ENCODE measurements at regions of chr2 and their contacts with region 1.

Region 1: DNA sequence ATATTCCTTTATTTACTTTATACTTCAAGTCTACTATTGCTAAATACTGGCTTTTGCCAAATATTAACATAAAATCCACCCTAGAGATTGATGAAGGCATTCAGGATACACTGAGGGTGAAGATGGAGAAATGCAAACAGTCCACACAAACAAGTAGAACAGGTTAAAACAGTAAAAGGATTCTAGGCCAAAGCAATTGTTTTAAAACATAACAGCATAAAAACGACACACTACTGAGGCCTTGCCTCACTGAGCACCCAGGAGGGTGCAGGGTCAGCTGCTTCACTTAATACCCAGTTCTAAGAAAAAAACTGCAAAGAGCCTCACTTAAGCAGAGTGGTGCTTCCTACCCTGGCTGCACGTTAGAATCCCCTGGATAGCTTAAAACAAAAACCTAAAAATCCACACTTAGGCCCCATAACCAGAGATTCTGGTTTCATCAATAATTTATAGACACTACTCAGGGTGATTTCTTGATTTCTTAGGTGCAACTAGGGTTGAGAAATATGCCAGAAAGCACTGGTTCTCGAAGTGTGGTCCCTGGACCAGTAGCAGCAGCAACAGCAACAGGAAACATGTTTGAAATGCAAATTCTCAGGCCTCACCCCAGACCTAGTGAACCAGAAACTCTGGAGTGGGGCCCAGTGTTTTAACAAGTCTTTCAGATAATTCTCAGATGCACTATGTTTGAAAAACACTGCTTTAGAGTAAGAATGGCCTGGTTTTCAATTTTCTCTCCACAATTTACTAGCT is 279.2 kb downstream of the ZEB2 start:
- DNase-seq: peak; percentile 74
- ATAC-seq: peak; percentile 93
- H3K4me3 ChIP-seq: peak overlapping the region; percentile 39; the same call in 1 of the 2 replicates
- H3K27ac ChIP-seq: peak overlapping the region; percentile 78
- H3K4me1 ChIP-seq: peaks cover 33% of the 10 kb centered on the region
- H3K27me3 ChIP-seq: no peaks in the 10 kb centered on the region
- CTCF ChIP-seq: no peak
- EP300 ChIP-seq: peak in 1 of 2 experiments; percentile 19; a peak in 1 of 4 replicates
- POLR2A ChIP-seq: no peak
- RAD21 ChIP-seq: 0 out of 2 replicates have a peak, but pooled peaks have one; percentile 1

Region 2: GRCh38 chr2:144215701-144216675 is 24.8 kb before region 1 on chr2:
- CTCF ChIA-PET with region 1: interaction called, 7 read pairs
- POLR2A ChIA-PET with region 1: interaction called, 9 read pairs
- RAD21 ChIA-PET with region 1: interaction called, 9 read pairs
- SMC1A ChIA-PET with region 1: interaction called, 68 read pairs
- in situ Hi-C with region 1: no loop called
- intact Hi-C with region 1: no loop called
- DNase-seq: peak; percentile 20
- ATAC-seq: peak; percentile 72
- H3K4me3 ChIP-seq: no peak overlapping the region
- H3K27ac ChIP-seq: peak overlapping the region; percentile 16
- H3K4me1 ChIP-seq: peaks cover 28% of the 10 kb centered on the region
- H3K27me3 ChIP-seq: no peaks in the 10 kb centered on the region
- CTCF ChIP-seq: no peak
- EP300 ChIP-seq: 0 out of 4 replicates have a peak, but pooled peaks of 1 of the 2 experiments have one; percentile 9
- POLR2A ChIP-seq: no peak
- RAD21 ChIP-seq: 0 out of 2 replicates have a peak, but pooled peaks have one; percentile 12

Region 3: DNA sequence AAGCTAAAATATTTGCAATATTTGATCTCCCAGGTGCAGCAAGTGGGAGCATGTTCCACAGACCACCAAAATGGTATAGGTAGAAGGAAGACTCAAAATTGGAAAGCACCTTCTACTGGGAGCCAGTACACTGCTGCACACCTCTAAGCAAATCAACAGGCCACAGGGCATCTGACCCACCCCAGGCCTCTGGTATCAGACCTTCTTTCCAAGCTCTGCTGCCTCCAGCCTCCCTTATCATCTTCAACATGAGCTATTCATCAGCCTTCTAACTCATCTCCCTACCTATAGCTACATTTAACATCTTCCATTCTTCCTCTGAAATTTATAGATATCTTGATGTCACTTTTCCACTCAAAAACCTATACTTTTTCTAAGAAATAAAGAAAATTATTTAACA is 15.7 kb before region 1 on chr2:
- CTCF ChIA-PET with region 1: interaction called, 8 read pairs
- POLR2A ChIA-PET with region 1: interaction called, 3 read pairs
- RAD21 ChIA-PET with region 1: interaction called, 9 read pairs
- SMC1A ChIA-PET with region 1: interaction called, 21 read pairs
- in situ Hi-C with region 1: no loop called
- intact Hi-C with region 1: no loop called
- DNase-seq: no peak
- ATAC-seq: no peak
- H3K4me3 ChIP-seq: no peak overlapping the region
- H3K27ac ChIP-seq: no peak overlapping the region
- H3K4me1 ChIP-seq: no peaks in the 10 kb centered on the region
- H3K27me3 ChIP-seq: no peaks in the 10 kb centered on the region
- CTCF ChIP-seq: no peak
- EP300 ChIP-seq: no peak
- POLR2A ChIP-seq: no peak
- RAD21 ChIP-seq: no peak

Region 4: DNA sequence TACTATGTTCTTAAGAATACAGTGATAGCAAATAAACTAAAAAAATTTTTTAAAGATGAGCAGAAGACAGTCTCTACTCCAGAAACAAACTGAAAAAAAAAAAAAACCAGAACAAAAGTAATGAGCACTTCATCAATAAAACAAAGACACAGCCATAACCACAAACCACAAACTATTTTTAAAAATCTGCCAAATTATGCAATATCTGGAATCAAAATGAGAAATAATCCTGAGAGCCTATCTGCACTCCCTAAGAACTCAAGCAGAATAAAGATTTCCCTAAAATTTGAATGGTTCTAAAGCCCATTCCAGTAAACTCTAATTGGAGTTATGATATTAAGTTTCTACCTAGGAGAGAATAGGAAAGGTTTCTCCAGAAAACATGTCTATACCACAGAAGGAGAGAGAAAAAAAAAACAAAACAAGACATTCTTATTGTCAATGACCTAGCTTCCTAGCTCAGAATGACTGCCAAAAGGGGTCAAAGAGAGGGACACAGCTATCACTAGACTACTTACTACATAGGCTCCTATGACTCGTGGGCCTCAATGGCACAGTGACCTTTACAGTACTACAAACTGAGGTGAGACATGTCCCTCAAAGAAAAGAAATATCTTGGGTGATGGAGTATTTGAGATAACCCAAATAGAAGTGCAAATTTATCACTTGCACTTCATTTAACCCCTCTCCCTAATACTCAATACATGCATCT is 16.4 kb after region 1 on chr2:
- CTCF ChIA-PET with region 1: interaction called, 11 read pairs
- POLR2A ChIA-PET with region 1: interaction called, 5 read pairs
- RAD21 ChIA-PET with region 1: interaction called, 13 read pairs
- SMC1A ChIA-PET with region 1: interaction called, 25 read pairs
- in situ Hi-C with region 1: no loop called
- intact Hi-C with region 1: no loop called
- DNase-seq: no peak
- ATAC-seq: no peak
- H3K4me3 ChIP-seq: no peak overlapping the region
- H3K27ac ChIP-seq: no peak overlapping the region
- H3K4me1 ChIP-seq: no peaks in the 10 kb centered on the region
- H3K27me3 ChIP-seq: no peaks in the 10 kb centered on the region
- CTCF ChIP-seq: no peak
- EP300 ChIP-seq: no peak
- POLR2A ChIP-seq: no peak
- RAD21 ChIP-seq: no peak

Region 5: GRCh38 chr2:144267239-144267638 is 26.5 kb after region 1 on chr2:
- CTCF ChIA-PET with region 1: no interaction called
- POLR2A ChIA-PET with region 1: interaction called, 3 read pairs
- RAD21 ChIA-PET with region 1: interaction called, 6 read pairs
- SMC1A ChIA-PET with region 1: interaction called, 17 read pairs
- in situ Hi-C with region 1: no loop called
- intact Hi-C with region 1: no loop called
- DNase-seq: peak; percentile 40
- ATAC-seq: peak; percentile 93
- H3K4me3 ChIP-seq: no peak overlapping the region
- H3K27ac ChIP-seq: peak overlapping the region; percentile 9; the same call in 1 of the 2 replicates
- H3K4me1 ChIP-seq: peaks cover 11% of the 10 kb centered on the region; the same call in 1 of the 2 replicates
- H3K27me3 ChIP-seq: no peaks in the 10 kb centered on the region
- CTCF ChIP-seq: no peak
- EP300 ChIP-seq: no peak; a peak in 1 of 4 replicates
- POLR2A ChIP-seq: no peak
- RAD21 ChIP-seq: no peak

Region 6: DNA sequence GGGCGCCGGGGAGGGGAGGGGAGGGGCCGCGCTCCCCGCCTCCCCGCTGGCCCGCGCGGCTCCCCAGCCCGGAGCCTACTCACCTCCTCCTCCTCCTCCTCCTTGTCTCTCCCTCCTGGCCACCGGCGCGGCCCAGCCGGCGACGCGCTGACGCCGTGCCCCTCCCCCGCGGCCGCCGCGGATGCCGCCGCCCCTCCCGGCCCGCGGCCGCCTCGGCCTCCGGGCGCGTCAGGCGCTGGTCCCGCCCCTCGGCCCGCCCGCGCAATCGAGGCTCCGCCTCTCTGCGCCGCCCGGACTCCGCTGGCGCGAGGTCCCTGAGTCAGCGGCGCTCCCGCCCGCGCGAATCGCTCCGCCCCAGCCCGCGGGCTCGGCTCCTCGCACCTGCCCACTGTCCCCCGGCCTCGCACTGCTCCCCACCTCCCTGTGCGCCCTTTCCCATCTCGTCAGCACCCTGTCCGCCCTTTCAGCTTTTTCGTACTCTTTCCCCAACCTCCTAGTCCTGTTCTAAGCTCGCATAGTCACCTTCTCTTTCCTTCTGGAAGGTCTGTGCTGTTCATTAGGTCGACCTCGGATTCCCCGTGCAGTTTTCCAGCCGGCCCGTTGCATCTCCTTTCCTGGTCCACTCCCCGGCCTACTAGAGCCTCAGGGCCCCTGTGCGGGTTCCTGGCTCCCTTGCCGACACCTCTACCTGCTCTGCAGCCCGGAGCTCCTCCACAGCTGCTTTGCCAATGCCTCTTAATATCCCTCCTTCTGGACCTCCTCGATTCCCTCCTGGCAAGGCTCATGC is 91.8 kb after region 1 on chr2:
- CTCF ChIA-PET with region 1: interaction called, 3 read pairs
- POLR2A ChIA-PET with region 1: interaction called, 4 read pairs
- RAD21 ChIA-PET with region 1: interaction called, 20 read pairs
- SMC1A ChIA-PET with region 1: interaction called, 17 read pairs
- in situ Hi-C with region 1: no loop called
- intact Hi-C with region 1: loop called (anchors 5 kb)
- DNase-seq: no peak
- ATAC-seq: peak; percentile 90
- H3K4me3 ChIP-seq: peak overlapping the region; percentile 56; the same call in 1 of the 2 replicates
- H3K27ac ChIP-seq: peak overlapping the region; percentile 78
- H3K4me1 ChIP-seq: peaks cover 8% of the 10 kb centered on the region
- H3K27me3 ChIP-seq: no peaks in the 10 kb centered on the region
- CTCF ChIP-seq: no peak
- EP300 ChIP-seq: no peak
- POLR2A ChIP-seq: peak; percentile 70
- RAD21 ChIP-seq: peak; percentile 19; the same call in 1 of the 2 replicates

Region 7: GRCh38 chr2:144479138-144479537 is 238.4 kb after region 1 on chr2:
- CTCF ChIA-PET with region 1: no interaction called
- POLR2A ChIA-PET with region 1: no interaction called
- RAD21 ChIA-PET with region 1: no interaction called
- SMC1A ChIA-PET with region 1: no interaction called
- in situ Hi-C with region 1: no loop called
- intact Hi-C with region 1: no loop called
- DNase-seq: no peak
- ATAC-seq: no peak
- H3K4me3 ChIP-seq: no peak overlapping the region
- H3K27ac ChIP-seq: no peak overlapping the region
- H3K4me1 ChIP-seq: no peaks in the 10 kb centered on the region
- H3K27me3 ChIP-seq: no peaks in the 10 kb centered on the region; a peak in 1 of 4 replicates
- CTCF ChIP-seq: no peak
- EP300 ChIP-seq: no peak
- POLR2A ChIP-seq: no peak
- RAD21 ChIP-seq: no peak